Mammary epithelial cell (primary cell): ENCODE measurements at regions of chr3 and their contacts with region 1.

Region 1: DNA sequence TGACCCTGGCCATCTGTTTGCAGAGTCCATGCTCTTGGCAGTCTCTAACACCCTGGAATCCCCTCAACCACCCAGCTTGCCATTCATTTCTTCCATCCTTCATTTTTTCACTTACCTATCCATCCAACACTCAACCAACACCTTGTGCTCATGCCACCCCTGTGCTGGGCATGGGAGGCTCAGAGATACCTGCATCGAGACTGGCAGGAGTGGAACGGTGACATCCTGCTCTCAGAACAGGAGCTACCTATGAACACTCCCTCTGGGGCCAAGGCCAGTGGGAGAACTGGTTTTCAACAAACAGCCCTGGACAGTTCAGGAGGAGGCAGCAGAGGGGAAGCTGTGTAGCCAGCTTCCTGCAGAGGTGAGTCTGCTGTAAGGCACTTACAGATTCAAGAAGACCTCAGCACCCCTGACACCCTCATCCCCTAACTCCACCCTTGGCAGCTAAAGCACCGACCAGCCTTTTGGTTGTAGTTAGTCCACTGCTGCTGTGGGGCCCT is 19.5 kb upstream of the ATP2B2 start:
- DNase-seq: no peak
- H3K4me3 ChIP-seq: no peak overlapping the region
- H3K27ac ChIP-seq: no peak overlapping the region
- H3K4me1 ChIP-seq: no peaks in the 10 kb centered on the region
- H3K27me3 ChIP-seq: peaks cover 2% of the 10 kb centered on the region
- CTCF ChIP-seq: no peak

Region 2: DNA sequence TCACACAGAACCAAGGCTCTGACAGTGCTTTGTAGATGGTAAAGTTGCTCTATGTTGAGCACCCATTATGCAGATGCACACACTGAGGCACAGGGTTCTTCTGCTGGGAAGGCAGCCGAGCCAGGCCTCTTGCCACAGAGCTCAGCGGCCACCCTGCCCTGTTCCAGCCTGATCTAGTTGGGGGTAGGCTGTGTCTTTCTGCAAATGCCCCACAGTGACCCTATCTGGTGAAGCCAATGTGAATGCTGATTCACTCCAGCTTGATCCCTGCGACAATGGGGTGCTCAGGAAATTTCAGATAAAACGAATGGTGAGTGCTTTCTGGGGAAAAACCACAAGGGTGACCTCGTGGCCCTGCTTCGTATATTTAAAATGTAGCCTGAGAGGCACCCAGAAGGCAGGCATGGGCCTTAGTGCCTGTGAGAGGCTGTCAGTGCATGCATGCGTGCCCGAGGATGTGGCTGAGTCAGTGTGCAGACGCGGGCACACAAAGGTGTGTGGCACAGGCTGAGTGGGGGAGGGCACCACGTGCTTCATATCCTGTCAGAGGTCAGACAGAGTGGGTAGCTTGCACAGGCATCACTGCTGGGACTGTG is 105.1 kb before region 1 on chr3:
- CTCF ChIA-PET with region 1: no interaction called
- dilution Hi-C with region 1: no loop called
- in situ Hi-C with region 1: no loop called
- intact Hi-C with region 1: no loop called
- DNase-seq: no peak
- H3K4me3 ChIP-seq: no peak overlapping the region
- H3K27ac ChIP-seq: no peak overlapping the region
- H3K4me1 ChIP-seq: no peaks in the 10 kb centered on the region
- H3K27me3 ChIP-seq: no peaks in the 10 kb centered on the region
- CTCF ChIP-seq: no peak

Region 3: DNA sequence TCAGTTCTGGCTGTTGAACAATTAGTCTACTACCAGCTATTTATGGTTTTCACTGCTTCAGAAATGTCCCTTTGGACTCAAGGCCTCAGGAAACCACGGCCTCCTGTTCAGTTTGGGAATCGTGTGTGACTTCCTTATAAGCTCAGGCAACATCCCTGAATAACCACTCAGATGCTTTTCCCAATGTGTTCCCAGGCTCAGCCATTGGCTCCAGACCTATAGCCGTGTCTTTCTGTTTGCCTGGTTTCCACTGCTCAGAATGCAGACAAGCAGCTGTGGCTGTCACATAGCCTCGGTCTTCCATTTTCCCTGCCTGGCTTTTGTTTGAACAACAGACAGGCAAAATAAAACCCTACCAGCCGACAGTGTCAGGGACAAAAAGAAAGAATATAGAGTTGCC is 43.7 kb after region 1 on chr3:
- CTCF ChIA-PET with region 1: no interaction called
- dilution Hi-C with region 1: loop called (anchors 5 kb)
- in situ Hi-C with region 1: no loop called
- intact Hi-C with region 1: no loop called
- DNase-seq: no peak
- H3K4me3 ChIP-seq: no peak overlapping the region
- H3K27ac ChIP-seq: no peak overlapping the region
- H3K4me1 ChIP-seq: no peaks in the 10 kb centered on the region
- H3K27me3 ChIP-seq: peaks cover 3% of the 10 kb centered on the region
- CTCF ChIP-seq: no peak